Activated CD4-positive, alpha-beta memory T cell treated with anti-CD3 and anti-CD28 coated beads, Interleukin-2, amount 10 ng/mL, durations not matched to agents 7 days and 5 days (primary cell): ENCODE measurements at regions of chr18 and their contacts with region 1.

Region 1: DNA sequence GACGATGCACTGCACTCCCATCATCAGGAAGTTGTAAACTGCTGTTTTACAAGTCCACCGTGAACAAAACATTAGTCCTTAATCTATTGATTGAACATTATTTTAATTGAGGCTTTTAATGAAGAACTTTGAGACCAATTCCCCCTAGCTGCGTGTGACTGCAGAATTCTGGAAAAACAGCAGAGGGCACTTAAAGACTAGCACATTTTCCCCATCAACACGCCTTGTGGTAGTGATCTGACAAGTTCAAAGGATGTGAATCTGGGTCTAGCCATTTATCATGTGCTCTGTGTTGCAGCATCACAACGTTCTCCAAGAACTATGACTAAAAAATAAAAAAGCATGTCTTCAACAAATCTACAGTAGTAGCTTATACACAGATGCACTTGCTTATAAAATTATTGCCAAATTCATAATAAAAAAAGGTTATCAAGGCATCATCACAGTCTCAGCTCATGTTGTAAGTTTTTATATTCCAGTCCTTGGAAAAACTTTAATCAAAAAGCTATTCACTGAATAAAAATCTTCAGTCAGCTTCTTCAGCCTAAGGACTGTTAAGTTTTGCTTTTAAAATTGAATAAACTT is 35.8 kb downstream of the SKOR2 start:
- DNase-seq: no peak
- H3K4me3 Mint-ChIP-seq: no peak overlapping the region
- H3K27ac Mint-ChIP-seq: no peak overlapping the region
- H3K4me1 Mint-ChIP-seq: no peaks in the 10 kb centered on the region
- H3K27me3 Mint-ChIP-seq: peaks cover 50% of the 10 kb centered on the region

Region 2: DNA sequence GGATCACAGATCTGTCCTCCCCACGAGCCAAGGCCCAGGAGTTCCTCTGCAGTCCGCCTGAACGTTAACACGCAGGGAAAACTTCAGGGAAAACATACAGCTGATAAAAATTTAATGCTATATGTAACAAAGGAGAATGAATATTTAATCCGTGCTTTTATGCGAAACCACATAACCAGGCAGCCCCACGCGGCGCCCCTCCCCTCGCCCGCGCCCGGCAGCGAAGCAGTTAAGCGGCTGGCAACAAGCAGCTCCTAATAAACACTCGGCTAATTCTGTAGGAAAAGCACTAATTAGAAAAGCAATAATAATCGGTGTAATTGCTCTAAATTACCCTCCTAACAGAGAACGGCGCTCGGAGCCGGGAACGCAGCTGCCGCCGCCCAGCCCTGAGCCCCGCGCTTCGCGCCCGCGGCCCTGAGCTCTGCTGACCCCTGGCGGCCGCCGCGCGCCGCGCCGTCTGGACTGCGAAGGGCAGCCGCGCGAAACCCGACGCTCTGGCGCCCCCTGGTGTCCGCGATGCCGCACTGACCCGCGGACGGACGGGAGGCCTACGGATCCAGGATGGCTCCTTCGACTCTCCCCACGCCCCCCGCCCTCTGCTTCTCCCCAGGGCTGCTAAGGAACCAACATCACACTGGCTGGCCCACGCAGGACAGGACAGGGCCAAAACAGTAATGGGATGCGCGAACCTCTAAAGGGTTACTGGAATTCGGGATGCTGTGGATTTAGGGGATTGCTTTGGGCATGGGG is 533.4 kb after region 1 on chr18:
- CTCF ChIA-PET with region 1: interaction called, 30 read pairs
- POLR2A ChIA-PET with region 1: no interaction called
- DNase-seq: peak; percentile 82
- H3K4me3 Mint-ChIP-seq: no peak overlapping the region
- H3K27ac Mint-ChIP-seq: no peak overlapping the region
- H3K4me1 Mint-ChIP-seq: peaks cover 3% of the 10 kb centered on the region
- H3K27me3 Mint-ChIP-seq: peaks cover 6% of the 10 kb centered on the region